ENCODE measurements at regions of chr6 and their contacts with region 1.

Region 1: DNA sequence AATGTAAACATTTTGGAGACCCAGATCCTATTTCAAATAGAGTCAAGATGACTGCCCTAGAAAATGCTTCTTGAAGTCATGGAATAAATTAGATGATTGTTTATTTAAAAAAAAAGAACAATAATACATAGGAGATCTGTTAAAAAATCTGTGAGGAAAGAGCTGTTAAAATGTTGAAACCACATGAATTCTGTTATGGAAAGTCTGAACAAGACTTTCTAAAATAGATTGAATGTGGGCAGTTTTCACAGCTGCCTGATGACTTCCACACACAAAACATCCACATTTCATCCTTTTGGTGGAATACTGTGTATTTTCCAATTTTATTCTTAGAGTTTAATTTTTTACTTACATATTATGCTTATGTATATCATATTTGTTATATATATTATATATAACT is 186.1 kb downstream of the LAMA2 start:
- DNase-seq: no peak
- H3K4me3 ChIP-seq: no peak overlapping the region
- H3K27ac ChIP-seq: peak overlapping the region in 50 of 59 donors; percentile 18 to 87 (median 65)
- H3K27me3 ChIP-seq: no peaks in the 10 kb centered on the region
- CTCF ChIP-seq: no peak

Region 2: GRCh38 chr6:129120856-129121638 is 52.0 kb after region 1 on chr6:
- intact Hi-C with region 1: loop called in 1 of 2 experiments (anchors 10 kb)
- DNase-seq: no peak
- H3K4me3 ChIP-seq: no peak overlapping the region
- H3K27ac ChIP-seq: peak overlapping the region in 34 of 59 donors; percentile 0 to 65 (median 26)
- H3K27me3 ChIP-seq: no peaks in the 10 kb centered on the region
- CTCF ChIP-seq: no peak